ENCODE measurements at regions of chr6 and their contacts with region 1.

Region 1: GRCh38 chr6:104771258-104771832 is 88.4 kb downstream of the HACE1 start:
- DNase-seq: peak; percentile 59
- H3K4me3 ChIP-seq: no peak overlapping the region
- H3K27ac ChIP-seq: no peak overlapping the region
- H3K4me1 ChIP-seq: no peaks in the 10 kb centered on the region
- H3K27me3 ChIP-seq: no peaks in the 10 kb centered on the region
- CTCF ChIP-seq: peak; percentile 74

Region 2: DNA sequence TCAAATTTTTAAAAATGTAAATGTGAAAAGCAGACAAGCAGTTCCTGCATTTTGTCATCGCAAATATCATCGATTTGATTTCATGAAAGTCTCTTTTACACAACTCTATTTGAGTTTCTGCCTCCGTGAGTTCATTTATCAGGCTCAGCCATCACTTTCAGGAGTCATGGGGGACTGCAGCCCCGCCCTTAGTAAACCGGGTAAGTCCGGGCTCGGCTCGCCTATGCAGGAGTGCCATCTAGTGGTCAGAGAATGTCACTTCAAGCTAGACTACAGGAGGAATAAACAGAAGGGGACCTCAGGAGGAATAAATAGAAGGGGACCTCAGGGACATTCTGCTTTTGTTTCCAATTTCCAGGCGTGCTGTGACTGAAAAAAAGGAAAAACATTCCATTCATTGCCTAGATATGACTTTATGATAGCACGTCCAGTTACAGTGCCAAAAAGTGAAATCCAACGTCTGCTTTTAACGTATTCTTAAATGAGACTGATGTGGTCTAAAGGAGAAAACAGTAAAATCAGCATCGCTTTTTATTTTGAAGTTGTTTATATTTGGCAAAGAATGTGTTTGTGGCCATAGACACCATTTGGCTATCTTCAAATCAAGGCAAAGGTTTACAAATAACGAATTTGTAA is 245.6 kb before region 1 on chr6:
- CTCF ChIA-PET with region 1: interaction called, 3 read pairs
- POLR2A ChIA-PET with region 1: no interaction called
- intact Hi-C with region 1: loop called (anchors 1 kb)
- DNase-seq: peak; percentile 91
- H3K4me3 ChIP-seq: peak overlapping the region; percentile 41
- H3K27ac ChIP-seq: no peak overlapping the region
- H3K4me1 ChIP-seq: peaks cover 7% of the 10 kb centered on the region
- H3K27me3 ChIP-seq: no peaks in the 10 kb centered on the region
- CTCF ChIP-seq: peak; percentile 93

Region 3: GRCh38 chr6:104682722-104683643 is 88.4 kb before region 1 on chr6:
- CTCF ChIA-PET with region 1: no interaction called
- POLR2A ChIA-PET with region 1: no interaction called
- intact Hi-C with region 1: loop called (anchors 1 kb)
- DNase-seq: peak; percentile 82
- H3K4me3 ChIP-seq: no peak overlapping the region
- H3K27ac ChIP-seq: no peak overlapping the region
- H3K4me1 ChIP-seq: peaks cover 4% of the 10 kb centered on the region
- H3K27me3 ChIP-seq: no peaks in the 10 kb centered on the region
- CTCF ChIP-seq: peak; percentile 97

Measured in A673 (cell line).